ENCODE measurements at regions of chr3 and their contacts with region 1.

Region 1: DNA sequence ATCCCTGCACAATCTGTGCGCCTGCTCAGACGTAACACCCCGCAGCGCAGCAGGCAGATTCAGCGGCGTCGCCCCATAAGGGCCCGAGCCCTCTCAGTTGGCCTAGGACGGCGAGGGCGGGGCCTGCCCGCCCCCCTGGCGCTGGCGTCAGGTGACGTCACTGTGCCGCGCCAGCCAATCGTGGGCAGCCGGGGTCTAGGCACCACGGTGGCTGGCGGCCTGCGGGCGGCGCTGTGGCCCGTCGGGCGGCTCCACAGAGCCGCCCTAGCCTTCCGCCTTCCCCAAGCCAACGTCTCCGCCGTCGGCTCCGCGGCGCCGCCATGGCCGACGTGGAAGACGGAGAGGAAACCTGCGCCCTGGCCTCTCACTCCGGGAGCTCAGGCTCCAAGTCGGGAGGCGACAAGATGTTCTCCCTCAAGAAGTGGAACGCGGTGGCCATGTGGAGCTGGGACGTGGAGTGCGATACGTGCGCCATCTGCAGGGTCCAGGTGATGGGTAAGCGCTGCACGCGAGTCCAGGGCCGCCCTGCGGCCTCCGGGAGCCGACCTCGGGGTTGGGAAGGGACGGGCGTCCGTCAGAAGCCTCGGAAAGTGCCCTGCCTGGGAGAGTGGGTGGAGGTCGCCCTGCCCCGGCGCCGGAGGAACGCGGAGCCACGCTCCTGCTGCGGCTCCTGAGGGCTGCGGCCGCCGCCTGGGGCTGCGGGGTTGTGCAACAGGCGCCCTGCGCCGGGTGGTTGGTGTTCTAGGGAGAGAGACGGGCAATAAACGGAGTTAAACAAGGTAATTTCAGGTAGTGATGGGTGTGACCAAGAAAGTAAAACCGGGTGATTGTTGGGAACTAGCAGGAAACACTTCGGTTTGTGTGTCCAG is at the start of gene RNF7:
- DNase-seq: peak; percentile 96
- H3K4me3 Mint-ChIP-seq: peak within 1 kb of the TSS; percentile 99
- H3K27ac Mint-ChIP-seq: peak within 1 kb of the TSS; percentile 99
- H3K4me1 Mint-ChIP-seq: peaks cover 36% of the 10 kb centered on the region
- H3K27me3 Mint-ChIP-seq: no peaks in the 10 kb centered on the region
- total RNA-seq, gene RNF7: 56.3 to 57.4 TPM

Region 2: DNA sequence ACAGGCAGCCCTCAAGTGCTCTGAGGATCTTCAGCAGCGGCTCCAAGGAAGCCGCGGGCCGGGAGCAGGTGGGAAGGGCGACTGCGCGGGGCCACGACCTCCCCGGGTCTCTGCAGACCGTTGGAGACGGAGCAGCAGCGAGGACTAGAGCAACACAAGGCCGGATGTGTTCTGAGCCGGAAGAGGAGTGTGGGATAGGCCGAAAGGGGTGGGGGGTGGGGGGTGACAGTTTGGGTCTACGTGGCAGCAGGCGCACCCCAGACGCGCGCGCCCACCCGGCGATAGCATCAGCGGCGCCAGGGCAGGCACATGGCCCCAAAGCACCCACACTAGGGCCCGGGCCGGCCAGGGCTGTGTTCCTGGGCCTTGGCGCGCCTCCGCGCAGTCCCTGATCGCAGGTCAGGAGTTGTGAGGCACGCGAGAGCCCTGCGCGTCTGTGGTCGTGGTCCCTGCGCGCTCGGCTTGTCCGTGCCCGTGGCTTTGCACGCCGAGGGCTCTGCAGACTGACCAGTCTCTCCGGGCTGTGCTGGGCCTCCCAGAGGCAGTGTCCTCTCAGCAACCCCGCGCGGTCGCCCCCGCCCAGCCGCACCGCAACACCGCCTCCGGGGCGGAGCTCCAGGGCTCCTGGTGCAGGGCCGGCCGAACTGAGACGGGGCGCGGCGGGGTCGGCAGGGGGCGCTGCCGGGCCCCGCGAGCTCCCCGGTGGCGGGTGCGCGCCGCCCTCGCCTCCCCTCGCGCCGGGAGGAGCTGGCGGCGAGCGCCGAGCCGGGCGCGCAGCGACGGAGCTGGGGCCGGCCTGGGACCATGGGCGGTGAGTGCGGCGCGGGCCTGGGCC is 506.9 kb before region 1 on chr3 and contains the start of gene PXYLP1:
- CTCF ChIA-PET with region 1: no interaction called
- intact Hi-C with region 1: loop called (anchors 5 kb)
- DNase-seq: peak; percentile 92
- H3K4me3 Mint-ChIP-seq: peak within 1 kb of the TSS; percentile 97
- H3K27ac Mint-ChIP-seq: peak within 1 kb of the TSS; percentile 95
- H3K4me1 Mint-ChIP-seq: peaks cover 34% of the 10 kb centered on the region
- H3K27me3 Mint-ChIP-seq: no peaks in the 10 kb centered on the region
- total RNA-seq, gene PXYLP1: 8.4 to 9.7 TPM

Region 3: GRCh38 chr3:141773676-141774075 is 35.4 kb after region 1 on chr3:
- CTCF ChIA-PET with region 1: no interaction called
- intact Hi-C with region 1: no loop called
- DNase-seq: no peak
- H3K4me3 Mint-ChIP-seq: no peak overlapping the region
- H3K27ac Mint-ChIP-seq: no peak overlapping the region
- H3K4me1 Mint-ChIP-seq: no peaks in the 10 kb centered on the region
- H3K27me3 Mint-ChIP-seq: no peaks in the 10 kb centered on the region

Region 4: DNA sequence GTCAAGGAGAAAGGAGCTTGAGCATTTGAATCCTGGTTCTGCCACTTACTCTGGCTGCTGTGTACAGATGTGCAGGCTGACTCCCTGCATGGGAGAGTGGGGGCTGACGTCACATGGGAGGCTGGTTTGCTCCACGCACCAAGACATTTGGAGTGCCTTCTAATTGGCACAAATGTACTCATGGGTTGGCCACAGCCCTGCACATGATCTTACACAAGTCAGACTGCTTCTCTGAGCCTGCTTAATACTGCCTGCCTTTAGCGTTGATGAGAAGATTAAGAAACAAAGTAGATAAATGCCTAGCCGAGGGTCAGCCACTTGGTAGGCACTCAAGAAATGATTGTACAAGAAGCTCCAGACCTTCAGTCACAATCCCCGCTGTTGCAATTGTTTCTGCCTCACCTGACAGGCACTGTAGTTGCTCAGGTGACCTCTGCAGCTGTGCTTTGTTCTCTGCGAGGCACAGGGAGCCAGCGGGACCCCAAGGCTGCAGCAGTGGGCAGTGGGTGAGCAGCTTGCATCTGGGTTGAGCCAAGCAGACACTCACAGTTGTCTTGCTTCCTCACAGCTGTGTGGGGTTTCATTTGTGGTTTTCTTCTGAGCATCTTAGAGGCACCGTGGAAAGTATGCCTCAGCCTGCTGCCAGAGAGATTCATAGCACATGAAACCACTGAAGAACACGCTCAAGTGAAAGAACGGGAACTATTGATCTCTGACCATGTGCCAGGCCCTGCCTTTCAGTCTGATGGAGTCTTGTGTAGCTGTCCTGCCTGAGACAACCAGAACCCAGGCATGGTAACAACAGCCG is 58.0 kb after region 1 on chr3:
- CTCF ChIA-PET with region 1: interaction called, 9 read pairs
- intact Hi-C with region 1: loop called (anchors 1 kb)
- DNase-seq: peak; percentile 90
- H3K4me3 Mint-ChIP-seq: peak overlapping the region; percentile 74
- H3K27ac Mint-ChIP-seq: peak overlapping the region; percentile 89
- H3K4me1 Mint-ChIP-seq: peaks cover 46% of the 10 kb centered on the region
- H3K27me3 Mint-ChIP-seq: no peaks in the 10 kb centered on the region

Region 5: GRCh38 chr3:141913150-141913811 is 175.0 kb after region 1 on chr3:
- CTCF ChIA-PET with region 1: interaction called, 17 read pairs
- intact Hi-C with region 1: loop called (anchors 1 kb)
- DNase-seq: peak; percentile 72
- H3K4me3 Mint-ChIP-seq: no peak overlapping the region
- H3K27ac Mint-ChIP-seq: no peak overlapping the region
- H3K4me1 Mint-ChIP-seq: peaks cover 2% of the 10 kb centered on the region
- H3K27me3 Mint-ChIP-seq: no peaks in the 10 kb centered on the region

Region 6: DNA sequence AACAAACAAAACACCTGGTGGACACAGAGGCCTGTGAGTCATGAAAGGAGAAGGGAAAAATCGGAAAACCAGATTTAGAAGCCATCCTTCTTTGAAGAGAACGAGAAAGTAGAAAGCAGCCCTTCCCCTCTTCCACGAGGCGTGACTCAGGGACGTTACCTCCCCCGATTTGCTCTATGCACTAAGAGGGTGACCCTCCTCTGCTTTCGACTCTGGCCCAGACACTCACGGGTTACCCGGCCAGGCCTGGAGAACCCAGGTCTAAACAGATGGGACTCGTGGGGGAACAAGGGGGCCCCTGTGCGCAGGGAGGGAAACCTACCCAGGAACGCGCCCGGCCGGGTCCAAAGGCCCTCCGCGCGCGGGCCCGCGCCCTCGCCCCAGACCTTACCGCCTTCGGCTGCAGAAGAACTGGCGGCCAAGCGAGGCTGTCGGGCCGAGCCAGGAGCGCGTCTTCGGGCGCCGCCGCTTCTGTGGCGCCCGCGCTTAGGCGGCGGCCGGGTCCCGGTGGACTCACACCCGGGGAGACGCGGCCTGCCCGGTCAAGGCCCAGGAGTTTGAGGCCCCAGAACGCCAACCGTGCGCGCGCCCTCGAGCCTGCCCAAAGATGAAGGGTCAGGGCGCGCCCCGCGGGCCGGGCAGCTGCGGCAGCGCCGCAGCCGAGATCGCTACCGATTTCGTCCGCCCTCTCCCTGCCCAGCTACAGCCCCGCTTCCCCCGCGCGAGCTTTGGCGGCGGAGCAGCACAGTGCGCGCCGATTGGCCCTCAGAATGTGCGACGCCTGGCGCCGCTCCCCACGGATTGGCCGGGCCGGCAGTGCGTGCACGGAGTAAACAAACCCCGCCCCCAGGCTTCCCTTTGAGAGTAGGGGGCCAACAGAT is 410.8 kb after region 1 on chr3 and contains the start of gene TFDP2:
- CTCF ChIA-PET with region 1: no interaction called
- intact Hi-C with region 1: loop called (anchors 2 kb)
- DNase-seq: peak; percentile 89
- H3K4me3 Mint-ChIP-seq: peak within 1 kb of the TSS; percentile 84
- H3K27ac Mint-ChIP-seq: no peak within 1 kb of the TSS
- H3K4me1 Mint-ChIP-seq: peaks cover 24% of the 10 kb centered on the region
- H3K27me3 Mint-ChIP-seq: no peaks in the 10 kb centered on the region
- total RNA-seq, gene TFDP2: 23.0 to 25.0 TPM

Region 7: DNA sequence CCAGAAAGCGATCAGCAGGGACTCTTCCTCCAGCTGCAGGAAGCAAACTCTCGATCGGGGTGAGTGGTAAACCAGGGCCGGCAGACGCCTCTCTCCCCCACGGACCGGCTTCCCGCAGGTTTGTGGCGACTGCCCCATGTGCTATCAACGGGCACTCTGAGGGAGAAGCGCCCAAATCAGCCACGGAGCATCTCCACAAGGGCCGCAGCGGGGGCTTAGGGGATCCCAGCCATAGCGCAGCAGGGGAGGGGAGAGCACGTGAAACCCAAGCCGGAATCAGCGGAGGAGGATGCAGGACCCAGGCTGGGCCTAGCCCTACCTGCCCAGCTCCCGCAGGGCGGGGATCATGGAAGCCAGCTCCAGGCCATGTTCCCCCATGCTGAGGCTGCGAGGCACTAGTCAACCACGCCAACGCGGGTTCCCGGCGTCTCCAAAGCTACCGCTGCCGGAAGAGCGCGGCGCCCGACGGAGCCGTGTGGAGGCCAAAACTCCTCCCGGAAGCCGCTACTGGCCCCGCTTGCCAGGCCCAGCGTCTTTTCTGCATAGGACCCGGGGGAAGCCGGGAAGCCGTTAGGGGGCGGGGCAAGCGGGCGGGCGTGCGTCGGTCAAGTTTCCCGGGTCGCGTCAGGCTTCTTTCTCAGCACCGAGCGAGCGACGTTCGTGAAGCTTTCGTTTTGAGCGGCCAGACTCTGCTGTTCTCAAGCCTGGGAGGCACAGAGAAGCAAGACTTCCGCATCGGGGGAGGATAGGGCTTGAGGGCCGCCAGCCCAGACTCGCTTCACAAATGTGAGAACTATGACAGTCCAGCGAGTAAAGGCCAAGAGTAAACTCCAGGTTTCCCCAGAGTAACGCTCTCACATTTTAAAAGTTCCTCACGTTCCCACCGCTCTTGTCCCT is 840.3 kb after region 1 on chr3 and contains the start of gene ATR:
- CTCF ChIA-PET with region 1: no interaction called
- intact Hi-C with region 1: loop called (anchors 5 kb)
- DNase-seq: peak; percentile 98
- H3K4me3 Mint-ChIP-seq: peak within 1 kb of the TSS; percentile 94
- H3K27ac Mint-ChIP-seq: peak within 1 kb of the TSS; percentile 95
- H3K4me1 Mint-ChIP-seq: peaks cover 41% of the 10 kb centered on the region
- H3K27me3 Mint-ChIP-seq: no peaks in the 10 kb centered on the region
- total RNA-seq, gene ATR: 42.5 to 43.1 TPM

Measured in activated naive CD4-positive, alpha-beta T cell treated with anti-CD3 and anti-CD28 coated beads for 36 hours (primary cell).